ENCODE measurements at regions of chr22 and their contacts with region 1.

Region 1: DNA sequence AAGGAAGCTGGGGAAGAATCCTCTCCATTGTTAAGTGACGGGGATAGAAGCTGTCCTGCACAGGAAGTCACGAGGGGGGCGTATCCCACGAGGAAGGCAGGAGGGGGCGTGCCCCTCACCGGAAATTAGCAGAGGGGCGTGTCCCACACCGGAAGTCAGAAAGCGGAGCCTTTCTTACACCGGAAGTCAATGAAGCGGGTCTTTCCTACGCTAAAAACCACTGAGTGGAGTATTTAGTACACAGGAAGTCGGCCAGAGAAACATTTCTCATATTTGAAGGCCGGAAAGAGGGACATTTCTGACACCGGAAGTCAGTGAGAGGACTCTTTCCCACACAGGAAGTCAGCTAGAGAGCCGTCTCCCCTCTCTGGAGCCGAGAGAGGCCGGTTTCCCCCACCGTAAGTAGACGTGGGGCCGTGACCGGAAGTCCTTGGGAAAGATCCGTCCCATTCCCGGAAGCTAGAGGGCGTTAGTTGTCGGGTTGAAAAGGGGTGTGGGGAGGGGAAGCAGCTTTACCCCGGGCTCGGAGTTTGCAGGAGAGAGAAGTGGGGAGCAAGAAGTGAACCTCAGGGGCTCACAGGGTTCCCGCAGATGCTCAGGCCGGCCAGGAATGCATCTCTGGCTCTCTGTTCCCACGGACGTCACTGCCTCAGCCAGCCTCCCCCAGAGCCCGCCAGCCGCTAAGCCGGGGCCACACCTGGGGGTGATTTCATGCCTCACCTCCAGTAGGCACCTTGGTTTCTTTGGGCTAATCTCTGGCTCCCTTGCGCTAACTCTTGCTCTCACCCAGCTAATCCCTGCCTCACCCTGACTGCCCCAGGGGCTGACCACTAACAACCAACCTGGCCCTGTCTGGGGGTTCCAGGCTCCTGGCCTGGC is 15.4 kb downstream of the MIAT start:
- DNase-seq: peak; percentile 88
- H3K4me3 ChIP-seq: peak overlapping the region; percentile 95
- H3K27ac ChIP-seq: peak overlapping the region; percentile 100
- H3K27me3 ChIP-seq: no peaks in the 10 kb centered on the region
- CTCF ChIP-seq: peak; percentile 65

Region 2: GRCh38 chr22:26360169-26360885 is 312.5 kb before region 1 on chr22:
- CTCF ChIA-PET with region 1: no interaction called
- POLR2A ChIA-PET with region 1: no interaction called
- DNase-seq: peak; percentile 44
- H3K4me3 ChIP-seq: peak overlapping the region; percentile 27
- H3K27ac ChIP-seq: no peak overlapping the region
- H3K27me3 ChIP-seq: peaks cover 2% of the 10 kb centered on the region
- CTCF ChIP-seq: peak; percentile 92

Region 3: DNA sequence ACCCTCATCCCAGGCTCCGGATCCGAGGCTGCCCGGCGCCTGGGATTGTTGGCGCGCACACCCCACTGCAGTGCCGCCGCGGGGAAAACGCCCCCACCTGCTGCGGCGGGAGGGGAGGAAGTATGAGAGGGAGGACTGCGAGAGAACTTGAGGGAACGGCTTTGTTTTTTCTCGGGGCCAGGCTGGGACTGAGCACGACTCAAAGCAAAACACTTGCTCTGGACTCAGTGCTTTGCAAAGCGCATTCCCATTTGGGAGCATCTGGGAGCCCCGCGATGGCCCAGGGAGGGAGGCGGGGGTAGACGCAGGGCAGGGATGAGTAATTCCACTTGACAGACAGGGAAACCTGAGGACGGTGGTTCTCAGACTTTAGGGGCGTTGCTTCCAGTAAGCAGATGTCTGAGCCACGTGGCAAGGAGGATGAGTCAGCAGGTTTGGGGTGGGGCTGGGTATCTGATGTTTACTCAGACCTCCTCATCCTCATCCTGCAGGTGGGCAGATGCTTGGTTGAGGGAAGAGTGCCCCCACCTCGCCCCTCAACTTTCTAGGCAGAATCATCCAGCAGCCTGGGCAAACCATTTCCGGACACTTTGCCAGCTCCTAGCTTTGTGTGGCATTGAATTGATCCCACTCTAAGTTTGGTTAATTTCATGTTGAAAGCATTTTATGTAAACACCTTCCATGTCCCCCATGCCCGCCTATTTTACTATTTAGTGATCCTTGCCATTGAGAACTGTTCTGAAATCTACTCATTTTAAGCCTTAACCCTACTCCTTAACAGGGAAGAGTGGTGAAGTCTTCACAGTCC is 14.0 kb before region 1 on chr22:
- CTCF ChIA-PET with region 1: interaction called, 11 read pairs
- POLR2A ChIA-PET with region 1: interaction called, 3 read pairs
- DNase-seq: peak; percentile 86
- H3K4me3 ChIP-seq: peak overlapping the region; percentile 69
- H3K27ac ChIP-seq: peak overlapping the region; percentile 57
- H3K27me3 ChIP-seq: peaks cover 21% of the 10 kb centered on the region
- CTCF ChIP-seq: no peak

Region 4: DNA sequence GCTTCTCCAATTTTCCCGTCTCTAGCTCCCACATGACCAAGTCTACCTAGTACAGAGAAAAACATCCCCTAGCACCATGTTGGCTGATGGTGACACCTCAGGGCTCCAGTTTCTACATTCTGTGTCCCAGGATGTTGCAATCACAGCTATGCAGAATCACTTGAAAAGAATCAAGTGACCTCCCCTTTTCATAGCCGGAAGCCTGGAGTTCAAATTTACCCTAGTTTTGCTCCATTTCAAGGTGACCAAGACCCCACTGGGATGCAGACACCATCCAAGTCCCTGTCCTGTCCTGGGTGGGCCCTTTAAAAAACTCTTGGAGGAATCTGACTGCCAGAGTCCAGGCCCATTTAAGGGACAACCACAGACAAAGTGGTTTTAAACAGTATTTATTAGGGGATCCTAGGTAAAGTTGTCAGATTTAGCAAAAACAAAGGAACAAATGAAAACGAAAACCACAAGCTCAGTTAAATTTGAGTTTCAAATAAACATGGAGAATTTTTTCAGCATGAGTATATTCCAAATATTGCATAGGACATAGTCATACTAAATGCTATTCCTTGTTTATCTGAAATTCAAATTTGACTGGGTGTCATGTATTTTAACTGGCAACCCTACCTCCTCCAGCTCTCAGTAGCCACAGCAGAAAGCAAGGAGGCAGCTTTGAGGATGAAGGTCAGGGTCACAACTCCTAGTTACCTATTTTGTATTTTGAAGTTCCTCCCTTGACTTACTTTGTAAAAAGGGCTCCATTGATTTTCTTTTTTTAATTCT is 37.0 kb after region 1 on chr22:
- CTCF ChIA-PET with region 1: interaction called, 15 read pairs
- POLR2A ChIA-PET with region 1: interaction called, 4 read pairs
- DNase-seq: peak; percentile 30
- H3K4me3 ChIP-seq: no peak overlapping the region
- H3K27ac ChIP-seq: peak overlapping the region; percentile 92
- H3K27me3 ChIP-seq: no peaks in the 10 kb centered on the region
- CTCF ChIP-seq: no peak

Region 5: DNA sequence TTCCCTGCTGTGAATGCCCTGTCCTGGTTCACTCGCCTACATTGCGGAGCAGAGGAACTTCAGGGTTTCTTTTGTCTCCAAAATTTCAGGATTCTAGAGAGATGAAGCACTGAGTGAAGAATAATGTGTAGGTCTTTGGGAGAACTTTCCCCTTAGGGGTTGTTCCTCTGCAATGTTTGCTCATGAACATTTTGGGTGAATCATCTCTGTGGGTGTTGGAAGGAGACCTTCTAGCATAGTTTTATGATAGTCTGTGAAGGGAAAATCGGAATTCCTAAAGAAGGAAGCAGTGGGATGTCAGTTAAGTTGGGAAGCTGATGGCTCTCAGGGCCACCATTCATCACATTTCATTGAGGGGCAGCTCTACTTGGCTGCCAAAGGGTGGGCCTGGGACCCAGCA is 49.3 kb after region 1 on chr22:
- CTCF ChIA-PET with region 1: no interaction called
- POLR2A ChIA-PET with region 1: no interaction called
- DNase-seq: no peak
- H3K4me3 ChIP-seq: no peak overlapping the region
- H3K27ac ChIP-seq: no peak overlapping the region
- H3K27me3 ChIP-seq: no peaks in the 10 kb centered on the region
- CTCF ChIP-seq: no peak